Activated T-helper 1 cell treated with anti-CD3 and anti-CD28 coated beads, Interleukin-12 subunit alpha, Interleukin-12 subunit beta, Interleukin-2, Interleukin-4 antibody, amounts not matched to agents 30 ng/mL and 10 ng/mL and 1 ng/mL, durations not matched to agents 14 hours and 24 hours and 36 hours (primary cell): ENCODE measurements at regions of chr2 and their contacts with region 1.

Region 1: DNA sequence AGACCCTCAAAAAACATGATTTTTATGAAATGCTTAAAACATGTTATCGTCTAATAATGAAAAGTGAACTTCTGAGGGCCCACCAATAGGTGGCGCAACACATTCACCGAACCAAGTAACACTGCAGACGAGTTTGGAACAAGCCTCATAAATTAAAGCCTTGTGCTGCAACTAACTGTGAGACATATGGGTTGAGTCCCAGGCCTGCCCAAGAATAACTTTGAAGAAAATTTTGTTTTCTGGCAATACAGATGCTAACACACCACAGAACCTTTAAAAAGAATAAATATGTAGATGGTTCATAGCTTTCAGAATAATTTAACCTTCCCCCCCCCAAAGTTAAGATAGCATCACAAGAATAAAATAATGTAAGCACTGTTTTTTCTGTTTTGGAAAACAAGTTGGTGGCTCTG is 285.8 kb downstream of the RNF144A start:
- DNase-seq: peak; percentile 27
- H3K4me3 Mint-ChIP-seq: no peak overlapping the region
- H3K27ac Mint-ChIP-seq: no peak overlapping the region
- H3K4me1 Mint-ChIP-seq: peaks cover 4% of the 10 kb centered on the region
- H3K27me3 Mint-ChIP-seq: peaks cover 4% of the 10 kb centered on the region

Region 2: DNA sequence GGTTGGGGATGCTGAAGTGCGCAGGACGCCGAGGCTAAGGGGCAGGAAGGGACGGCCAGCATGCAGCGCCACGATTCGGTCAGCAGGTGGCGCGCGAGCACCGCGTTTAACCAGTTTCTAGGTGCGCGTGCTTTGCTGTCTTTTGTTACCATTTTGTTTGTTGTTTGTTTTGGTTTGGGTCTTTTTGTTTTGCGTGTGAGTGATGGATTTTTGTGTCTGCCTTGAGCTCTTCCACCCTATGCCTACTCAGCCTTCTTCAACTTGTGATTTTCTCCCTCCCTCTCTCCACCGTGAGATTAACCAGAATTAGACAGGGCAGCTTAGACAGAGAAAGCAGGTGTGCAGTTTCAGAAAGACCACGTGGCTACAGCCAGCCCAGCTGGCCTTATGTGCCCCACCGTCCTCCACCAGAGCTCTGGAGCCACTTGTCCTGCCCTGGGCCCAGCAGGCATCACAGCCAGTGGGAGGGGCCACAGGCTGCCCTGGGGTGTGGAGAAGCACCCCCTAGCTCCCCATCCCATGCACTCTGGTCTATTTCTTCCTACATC is 105.6 kb before region 1 on chr2:
- intact Hi-C with region 1: loop called (anchors 1 kb)
- DNase-seq: peak; percentile 56
- H3K4me3 Mint-ChIP-seq: peak overlapping the region; percentile 57
- H3K27ac Mint-ChIP-seq: peak overlapping the region; percentile 4
- H3K4me1 Mint-ChIP-seq: peaks cover 9% of the 10 kb centered on the region
- H3K27me3 Mint-ChIP-seq: no peaks in the 10 kb centered on the region

Region 3: DNA sequence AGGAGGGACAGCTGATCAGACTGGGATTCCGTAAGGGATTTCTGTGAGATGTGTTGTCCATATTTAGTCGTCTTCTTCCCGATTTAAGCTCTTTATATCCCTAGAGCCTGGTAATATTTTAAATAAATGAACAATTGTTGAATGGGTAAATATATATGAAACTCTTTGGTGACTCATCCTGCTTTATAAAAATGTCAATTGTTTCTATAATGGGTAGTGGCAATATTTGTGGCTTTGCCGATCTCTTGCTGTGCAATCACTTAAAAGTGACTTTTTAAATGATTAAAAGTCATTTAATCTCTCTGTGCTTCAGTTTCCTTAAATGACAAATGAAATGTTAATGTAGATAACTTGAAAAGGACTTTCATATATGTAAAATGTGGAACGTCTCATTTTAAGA is 53.3 kb after region 1 on chr2:
- intact Hi-C with region 1: no loop called
- DNase-seq: no peak
- H3K4me3 Mint-ChIP-seq: no peak overlapping the region
- H3K27ac Mint-ChIP-seq: no peak overlapping the region
- H3K4me1 Mint-ChIP-seq: no peaks in the 10 kb centered on the region
- H3K27me3 Mint-ChIP-seq: peaks cover under 1% of the 10 kb centered on the region

Region 4: DNA sequence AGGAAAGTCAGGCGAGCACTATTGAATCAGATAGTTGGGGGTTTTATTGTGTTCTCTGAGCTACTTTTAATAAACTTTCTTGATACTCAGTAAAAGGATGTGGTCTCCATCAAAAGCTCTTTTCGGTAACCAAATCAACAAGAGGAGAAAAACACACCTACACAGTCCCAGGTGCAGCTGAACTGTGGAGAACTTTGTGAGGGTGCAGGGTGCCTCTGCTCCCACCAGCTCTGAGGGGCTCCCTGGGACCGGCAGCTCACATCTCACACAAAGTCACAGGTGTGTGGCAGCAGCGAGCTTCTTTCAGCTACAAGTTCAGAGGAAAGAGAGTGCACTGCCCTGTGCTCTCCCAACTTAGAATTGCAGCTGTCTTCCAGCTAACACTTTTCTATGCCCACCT is 364.6 kb after region 1 on chr2:
- intact Hi-C with region 1: loop called (anchors 10 kb)
- DNase-seq: peak; percentile 47
- H3K4me3 Mint-ChIP-seq: peak overlapping the region; percentile 25
- H3K27ac Mint-ChIP-seq: peak overlapping the region; percentile 90
- H3K4me1 Mint-ChIP-seq: peaks cover 59% of the 10 kb centered on the region
- H3K27me3 Mint-ChIP-seq: no peaks in the 10 kb centered on the region

Region 5: GRCh38 chr2:8488001-8488738 is 1285.1 kb after region 1 on chr2:
- intact Hi-C with region 1: loop called (anchors 1 kb)
- DNase-seq: peak; percentile 57
- H3K4me3 Mint-ChIP-seq: peak overlapping the region; percentile 75
- H3K27ac Mint-ChIP-seq: peak overlapping the region; percentile 86
- H3K4me1 Mint-ChIP-seq: peaks cover 61% of the 10 kb centered on the region
- H3K27me3 Mint-ChIP-seq: no peaks in the 10 kb centered on the region

Region 6: GRCh38 chr2:8761529-8762164 is 1558.6 kb after region 1 on chr2:
- intact Hi-C with region 1: loop called (anchors 1 kb)
- DNase-seq: no peak
- H3K4me3 Mint-ChIP-seq: no peak overlapping the region
- H3K27ac Mint-ChIP-seq: no peak overlapping the region
- H3K4me1 Mint-ChIP-seq: no peaks in the 10 kb centered on the region
- H3K27me3 Mint-ChIP-seq: no peaks in the 10 kb centered on the region

Region 7: DNA sequence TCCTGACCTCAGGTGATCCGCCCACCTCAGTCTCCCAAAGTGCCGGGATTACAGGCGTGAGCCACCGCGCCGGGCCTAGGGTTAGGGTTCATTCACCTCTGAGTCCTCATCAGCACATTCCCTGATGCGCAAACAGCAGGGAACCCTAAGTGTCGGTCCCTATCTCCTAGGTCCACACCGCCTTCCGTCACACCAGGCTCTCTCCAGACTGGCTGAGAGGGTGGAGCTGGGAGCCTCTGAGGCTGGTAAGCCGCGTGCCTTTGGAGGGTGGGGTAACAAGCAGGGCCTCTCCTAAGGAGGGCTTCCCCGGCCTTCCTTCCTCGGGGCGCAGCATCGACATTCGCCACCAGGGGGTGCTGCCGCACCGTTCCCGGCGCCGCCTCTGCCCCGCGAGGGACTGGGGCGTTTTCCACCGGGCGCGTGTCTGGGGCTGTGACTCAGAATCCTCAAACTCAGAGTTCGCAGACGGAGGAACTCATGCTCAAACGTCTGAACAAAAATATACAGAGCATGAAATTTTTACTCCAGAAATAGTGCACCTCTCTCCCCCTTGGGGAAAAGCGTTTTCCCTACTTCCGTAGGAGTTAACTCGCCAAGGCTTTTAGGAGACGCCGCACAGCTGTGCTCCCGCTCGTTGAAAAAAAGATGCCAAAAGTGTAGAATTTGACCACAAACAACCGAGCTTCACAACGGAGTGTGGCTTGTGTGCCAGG is 1939.6 kb after region 1 on chr2:
- intact Hi-C with region 1: loop called (anchors 2 kb)
- DNase-seq: peak; percentile 70
- H3K4me3 Mint-ChIP-seq: no peak overlapping the region
- H3K27ac Mint-ChIP-seq: no peak overlapping the region
- H3K4me1 Mint-ChIP-seq: peaks cover 6% of the 10 kb centered on the region
- H3K27me3 Mint-ChIP-seq: peaks cover 16% of the 10 kb centered on the region